PC-3 (cell line): ENCODE measurements at regions of chr22 and their contacts with region 1.

Region 1: GRCh38 chr22:30114361-30114760 is 34.1 kb downstream of the HORMAD2 start:
- DNase-seq: no peak
- ATAC-seq: no peak
- H3K4me3 ChIP-seq: no peak overlapping the region
- H3K27ac ChIP-seq: no peak overlapping the region
- H3K4me1 ChIP-seq: peaks cover 11% of the 10 kb centered on the region
- H3K27me3 ChIP-seq: no peaks in the 10 kb centered on the region
- CTCF ChIP-seq: no peak

Region 2: GRCh38 chr22:30178181-30179126 is 64.1 kb after region 1 on chr22:
- CTCF ChIA-PET with region 1: no interaction called
- POLR2A ChIA-PET with region 1: no interaction called
- intact Hi-C with region 1: loop called (anchors 5 kb)
- DNase-seq: no peak
- ATAC-seq: peak; percentile 43
- H3K4me3 ChIP-seq: no peak overlapping the region
- H3K27ac ChIP-seq: no peak overlapping the region
- H3K4me1 ChIP-seq: no peaks in the 10 kb centered on the region
- H3K27me3 ChIP-seq: no peaks in the 10 kb centered on the region
- CTCF ChIP-seq: 0 out of 2 replicates have a peak, but pooled peaks have one; percentile 8

Region 3: DNA sequence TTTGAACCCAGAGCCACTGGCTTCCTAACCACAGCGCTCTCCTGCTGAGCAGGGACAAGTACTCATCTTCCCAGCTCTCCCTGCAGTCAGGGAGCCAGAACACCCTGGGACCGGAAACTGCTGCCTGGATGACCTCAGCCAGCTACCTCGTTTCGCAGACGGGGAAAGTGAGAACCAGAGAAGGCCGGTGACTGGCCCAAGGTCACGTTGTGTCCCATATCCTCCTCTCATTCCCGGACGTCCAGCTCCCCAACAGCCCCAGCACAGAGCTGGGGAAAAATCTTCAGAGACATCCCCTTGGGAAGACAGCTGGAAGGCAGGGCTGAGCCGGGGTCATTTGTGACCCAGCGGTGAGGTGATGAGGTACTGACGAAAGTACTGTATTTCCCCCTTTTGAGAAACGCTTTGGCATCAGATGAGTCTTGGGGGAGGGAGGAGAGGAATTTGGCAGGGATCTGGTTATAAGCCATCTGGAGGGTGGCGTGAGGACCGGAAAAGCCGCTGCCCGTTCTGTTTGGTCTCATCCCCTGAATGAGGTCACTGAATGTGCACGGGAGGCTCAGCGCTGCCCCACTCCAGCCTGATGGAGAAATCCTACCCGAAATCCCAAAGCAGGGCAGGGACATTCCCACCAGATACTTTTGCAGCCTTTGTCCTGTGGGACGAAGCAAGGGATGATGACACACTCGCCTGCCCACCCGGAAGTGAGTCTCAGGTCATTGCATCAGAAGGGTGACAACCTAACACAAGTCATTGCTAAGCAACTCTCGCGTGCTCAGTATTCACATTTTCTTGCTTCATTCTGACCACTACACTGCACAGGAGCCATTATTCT is 91.1 kb after region 1 on chr22:
- CTCF ChIA-PET with region 1: no interaction called
- POLR2A ChIA-PET with region 1: no interaction called
- intact Hi-C with region 1: loop called (anchors 5 kb)
- DNase-seq: peak; percentile 91
- ATAC-seq: peak; percentile 23
- H3K4me3 ChIP-seq: no peak overlapping the region
- H3K27ac ChIP-seq: peak overlapping the region; percentile 100
- H3K4me1 ChIP-seq: peaks cover 79% of the 10 kb centered on the region
- H3K27me3 ChIP-seq: no peaks in the 10 kb centered on the region
- CTCF ChIP-seq: no peak

Region 4: GRCh38 chr22:30245985-30246901 is 131.9 kb after region 1 on chr22 and contains the start of gene LIF:
- CTCF ChIA-PET with region 1: no interaction called
- POLR2A ChIA-PET with region 1: no interaction called
- intact Hi-C with region 1: no loop called
- DNase-seq: no peak
- ATAC-seq: peak; percentile 6
- H3K4me3 ChIP-seq: peak within 1 kb of the TSS; percentile 38; the same call in 1 of the 2 replicates
- H3K27ac ChIP-seq: peak within 1 kb of the TSS; percentile 99
- H3K4me1 ChIP-seq: peaks cover 52% of the 10 kb centered on the region
- H3K27me3 ChIP-seq: no peaks in the 10 kb centered on the region
- CTCF ChIP-seq: no peak
- total RNA-seq, gene LIF: 64.1 and 71.6 TPM in 2 replicates

Region 5: GRCh38 chr22:30262917-30263741 is 148.8 kb after region 1 on chr22:
- CTCF ChIA-PET with region 1: no interaction called
- POLR2A ChIA-PET with region 1: no interaction called
- intact Hi-C with region 1: no loop called
- DNase-seq: peak; percentile 72
- ATAC-seq: peak; percentile 48
- H3K4me3 ChIP-seq: peak overlapping the region; percentile 45; the same call in 1 of the 2 replicates
- H3K27ac ChIP-seq: no peak overlapping the region; the same call in 1 of the 2 replicates
- H3K4me1 ChIP-seq: peaks cover 15% of the 10 kb centered on the region
- H3K27me3 ChIP-seq: no peaks in the 10 kb centered on the region
- CTCF ChIP-seq: peak; percentile 83

Region 6: DNA sequence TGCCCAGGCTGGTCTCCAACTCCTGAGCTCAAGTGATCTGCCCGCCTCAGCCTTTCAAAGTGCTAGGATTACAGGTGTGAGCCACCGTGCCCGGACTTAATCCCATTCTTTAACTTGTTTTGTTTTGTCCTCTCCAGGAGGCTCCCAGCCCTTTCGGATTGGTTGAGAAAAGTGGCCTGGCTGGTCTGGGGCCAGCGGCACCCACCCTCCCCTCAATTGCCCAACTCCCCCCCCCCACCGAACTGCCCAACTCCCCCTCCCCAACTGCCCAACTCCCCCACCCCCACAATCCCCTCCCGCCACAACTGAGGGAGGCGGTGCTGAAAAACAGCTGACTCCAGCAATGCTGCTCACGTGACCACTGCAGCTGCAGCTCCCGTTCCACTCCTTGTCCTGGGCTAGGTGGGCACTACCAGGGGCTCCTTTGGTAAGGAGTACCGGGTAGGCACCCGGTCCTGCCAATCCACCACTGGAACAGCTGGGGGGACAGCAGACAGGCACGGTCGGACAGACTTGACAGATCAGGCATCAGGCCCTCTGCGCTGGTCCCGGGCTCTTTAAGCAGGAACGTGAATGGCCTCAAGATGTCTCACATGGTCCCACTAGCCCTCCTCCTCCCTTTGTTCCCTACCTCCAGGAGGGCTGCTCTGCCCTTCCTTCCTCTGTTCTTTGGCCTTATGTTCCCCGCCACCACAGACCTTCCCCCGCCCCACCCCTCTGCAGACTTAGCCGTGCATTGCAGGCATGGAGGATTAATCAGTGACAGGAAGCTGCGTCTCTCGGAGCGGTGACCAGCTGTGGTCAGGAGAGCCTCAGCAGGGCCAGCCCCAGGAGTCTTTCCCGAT is 492.3 kb after region 1 on chr22 and contains the start of gene TCN2:
- CTCF ChIA-PET with region 1: no interaction called
- POLR2A ChIA-PET with region 1: no interaction called
- intact Hi-C with region 1: no loop called
- DNase-seq: peak; percentile 49
- ATAC-seq: peak; percentile 55
- H3K4me3 ChIP-seq: peak within 1 kb of the TSS; percentile 73
- H3K27ac ChIP-seq: no peak within 1 kb of the TSS
- H3K4me1 ChIP-seq: peaks cover 34% of the 10 kb centered on the region
- H3K27me3 ChIP-seq: no peaks in the 10 kb centered on the region
- CTCF ChIP-seq: no peak
- total RNA-seq, gene TCN2: 1.7 and 4.2 TPM in 2 replicates